ENCODE measurements at regions of chr16 and their contacts with region 1.

Region 1: GRCh38 chr16:50585331-50585776 is 37.2 kb downstream of the NKD1 start:
- DNase-seq: no peak
- H3K4me3 Mint-ChIP-seq: no peak overlapping the region
- H3K27ac Mint-ChIP-seq: no peak overlapping the region
- H3K4me1 Mint-ChIP-seq: peaks cover 31% of the 10 kb centered on the region
- H3K27me3 Mint-ChIP-seq: no peaks in the 10 kb centered on the region

Region 2: DNA sequence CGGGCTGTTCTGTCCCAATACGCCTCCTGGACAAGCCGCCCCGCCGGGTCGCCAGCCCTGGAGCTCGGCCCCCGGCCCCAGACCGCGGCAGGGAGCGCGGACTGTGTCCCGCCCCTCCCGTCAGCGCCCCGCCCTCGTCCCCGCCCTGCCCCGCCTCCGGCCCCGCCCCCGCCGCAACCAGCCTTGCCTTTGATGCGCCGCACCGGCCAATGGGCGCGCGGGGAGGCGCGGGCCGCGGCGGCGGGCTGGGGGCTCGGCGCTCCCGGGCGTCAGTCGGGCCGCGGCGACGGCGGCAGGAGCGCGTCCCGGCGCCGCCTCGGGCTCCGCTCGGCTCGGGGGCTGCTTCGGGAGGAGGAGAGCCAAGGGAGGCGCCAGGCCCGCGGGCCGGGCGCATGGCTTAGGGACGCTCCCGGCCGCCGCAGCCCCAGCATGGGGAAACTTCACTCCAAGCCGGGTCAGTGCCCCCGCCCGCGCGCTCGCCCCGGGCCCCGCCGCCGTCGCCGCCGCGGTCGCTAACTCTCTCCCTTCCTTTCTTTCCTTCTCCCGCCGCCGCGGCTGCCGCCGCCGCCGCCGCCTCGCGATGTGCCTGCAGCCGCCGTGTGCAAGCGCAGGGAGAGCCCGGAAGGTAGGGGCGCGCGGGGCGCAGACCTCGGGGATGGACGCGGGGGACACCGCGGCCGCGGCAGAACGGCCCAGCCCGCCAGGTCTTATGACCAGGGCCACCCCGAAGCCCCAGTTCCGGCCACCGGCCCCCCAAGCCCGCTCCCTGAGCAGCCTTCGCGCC is 37.0 kb before region 1 on chr16 and contains the start of gene NKD1:
- intact Hi-C with region 1: loop called (anchors 2 kb)
- DNase-seq: peak; percentile 59
- H3K4me3 Mint-ChIP-seq: peak within 1 kb of the TSS; percentile 90
- H3K27ac Mint-ChIP-seq: peak within 1 kb of the TSS; percentile 28
- H3K4me1 Mint-ChIP-seq: peaks cover 4% of the 10 kb centered on the region
- H3K27me3 Mint-ChIP-seq: peaks cover 67% of the 10 kb centered on the region
- total RNA-seq, gene NKD1: 0.96 and 1.8 TPM in 2 replicates

Measured in activated T-helper 2 cell treated with anti-CD3 and anti-CD28 coated beads, Interferon-gamma antibody, Interleukin-2, Interleukin-4, amounts not matched to agents 10 μg/mL and 5 μg/mL and 100 μg/mL, durations not matched to agents 14 hours and 24 hours and 36 hours (primary cell).